HepG2 (cell line): ENCODE measurements at regions of chr14 and their contacts with region 1.

Region 1: DNA sequence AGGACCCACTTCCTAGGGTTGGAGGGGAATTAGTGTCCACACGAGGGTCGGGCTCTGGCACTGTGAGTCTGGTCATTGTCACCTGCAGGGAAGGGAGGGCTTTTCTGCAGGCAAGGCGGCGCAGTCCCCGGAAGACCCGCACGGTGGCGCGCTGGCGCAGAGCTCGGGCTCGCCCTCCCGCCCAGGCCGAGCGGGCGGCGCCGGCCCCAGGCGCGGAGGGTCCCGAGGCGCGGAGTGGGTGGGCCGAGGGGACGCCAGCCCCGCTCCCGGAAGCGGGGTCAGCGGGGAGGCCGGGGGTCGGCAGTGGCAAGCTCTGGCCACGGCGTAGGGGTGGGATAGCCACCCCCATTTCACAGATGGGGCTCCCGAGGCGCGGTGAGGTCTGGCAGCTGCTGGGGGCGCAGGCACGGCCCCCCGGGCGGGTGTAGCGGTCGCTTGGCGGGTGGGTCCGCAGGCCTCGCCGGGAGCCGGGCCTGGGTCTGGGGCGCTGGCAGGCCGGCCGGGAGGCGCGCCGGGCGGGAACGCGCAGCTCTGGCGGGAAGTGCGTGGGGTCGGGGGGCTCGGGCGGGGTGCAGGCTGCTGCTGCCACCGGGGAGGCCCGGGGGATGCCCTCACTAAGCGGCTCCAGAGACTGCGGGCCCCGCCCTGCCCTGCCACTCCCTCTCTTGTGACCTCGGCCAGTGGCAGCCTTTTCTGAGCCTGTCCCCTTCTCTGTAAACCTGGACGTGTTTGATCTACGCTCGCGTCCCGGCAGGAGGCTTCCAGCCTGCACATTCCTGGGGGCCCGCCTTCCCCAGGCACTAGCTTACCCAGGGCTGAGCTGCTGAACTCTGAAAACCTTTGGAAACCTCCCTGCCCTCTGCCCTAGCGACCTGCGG is 46.1 kb downstream of the CYP46A1 start:
- DNase-seq: peak; percentile 93
- ATAC-seq: peak; percentile 90
- H3K4me3 ChIP-seq: peak overlapping the region; percentile 51 to 71 (median 63); a peak in 5 of 6 replicates
- H3K27ac ChIP-seq: peak overlapping the region; percentile 65
- H3K4me1 ChIP-seq: peaks cover 49% of the 10 kb centered on the region
- H3K27me3 ChIP-seq: peaks cover 8 to 43% of the 10 kb centered on the region in 2 experiments
- CTCF ChIP-seq: peak; percentile 83
- EP300 ChIP-seq: peak; percentile 26 to 32; a peak in 1 of 4 replicates
- POLR2A ChIP-seq: 0 out of 4 replicates have a peak, but pooled peaks of 1 of the 2 experiments have one; percentile 14
- RAD21 ChIP-seq: peak; percentile 96

Region 2: DNA sequence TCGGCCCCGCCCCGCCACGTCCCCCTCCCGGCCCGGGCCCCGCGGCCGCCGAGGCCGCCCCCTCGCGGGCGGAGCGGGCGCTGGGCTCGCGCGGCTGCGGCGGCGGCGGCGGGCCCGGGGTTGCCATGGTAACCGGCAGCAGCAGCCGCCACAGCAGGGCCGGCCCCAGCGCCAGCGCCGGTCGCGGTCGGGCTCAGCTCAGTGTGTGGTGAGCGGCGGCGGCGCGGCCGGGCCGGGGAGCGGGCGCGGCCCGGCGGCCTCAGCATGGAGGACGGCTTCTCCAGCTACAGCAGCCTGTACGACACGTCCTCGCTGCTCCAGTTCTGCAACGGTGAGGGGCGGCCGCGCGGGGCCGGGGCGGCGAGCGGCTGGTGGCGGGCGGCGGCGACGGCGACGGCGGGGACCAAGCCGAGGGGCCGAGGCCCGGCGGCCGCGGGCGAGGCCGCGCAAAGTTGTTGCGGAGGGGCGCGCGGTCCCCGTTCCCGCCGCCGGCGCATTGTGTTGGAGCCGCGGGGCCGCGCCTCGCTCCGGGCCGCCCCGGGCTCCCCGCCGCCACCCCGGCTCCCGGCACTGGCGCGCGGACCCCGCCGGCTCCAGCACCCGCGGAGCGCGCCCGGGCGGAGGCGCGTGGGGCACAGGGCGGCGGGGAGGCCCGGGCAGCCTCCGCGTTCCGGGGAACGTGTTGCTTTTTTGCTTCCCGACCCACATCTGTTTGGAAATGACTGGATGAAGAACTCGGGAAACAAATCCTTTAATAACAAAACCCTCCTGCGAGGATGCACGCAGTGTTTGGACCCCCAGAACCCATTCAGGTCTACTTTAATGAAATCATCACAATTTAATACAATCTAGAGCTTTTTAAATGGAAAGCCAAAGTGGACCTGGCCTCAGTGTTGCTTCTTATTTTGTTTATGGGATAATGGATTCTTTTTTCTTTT is 63.3 kb after region 1 on chr14 and contains the start of gene EML1:
- CTCF ChIA-PET with region 1: interaction called, 12 read pairs
- POLR2A ChIA-PET with region 1: no interaction called
- in situ Hi-C with region 1: no loop called
- intact Hi-C with region 1: loop called (anchors 1 kb)
- DNase-seq: peak; percentile 41
- ATAC-seq: peak; percentile 94
- H3K4me3 ChIP-seq: peak within 1 kb of the TSS; percentile 44 to 64 (median 62)
- H3K27ac ChIP-seq: no peak within 1 kb of the TSS
- H3K4me1 ChIP-seq: peaks cover 34% of the 10 kb centered on the region
- H3K27me3 ChIP-seq: peaks cover 2 to 37% of the 10 kb centered on the region in 2 experiments; a peak in 4 of 5 replicates
- CTCF ChIP-seq: no peak; the same call in 1 of the 2 replicates
- EP300 ChIP-seq: no peak
- POLR2A ChIP-seq: no peak
- RAD21 ChIP-seq: peak; percentile 25; the same call in 1 of the 2 replicates
- total RNA-seq, gene EML1: 1.3 and 1.7 TPM in 2 replicates

Region 3: DNA sequence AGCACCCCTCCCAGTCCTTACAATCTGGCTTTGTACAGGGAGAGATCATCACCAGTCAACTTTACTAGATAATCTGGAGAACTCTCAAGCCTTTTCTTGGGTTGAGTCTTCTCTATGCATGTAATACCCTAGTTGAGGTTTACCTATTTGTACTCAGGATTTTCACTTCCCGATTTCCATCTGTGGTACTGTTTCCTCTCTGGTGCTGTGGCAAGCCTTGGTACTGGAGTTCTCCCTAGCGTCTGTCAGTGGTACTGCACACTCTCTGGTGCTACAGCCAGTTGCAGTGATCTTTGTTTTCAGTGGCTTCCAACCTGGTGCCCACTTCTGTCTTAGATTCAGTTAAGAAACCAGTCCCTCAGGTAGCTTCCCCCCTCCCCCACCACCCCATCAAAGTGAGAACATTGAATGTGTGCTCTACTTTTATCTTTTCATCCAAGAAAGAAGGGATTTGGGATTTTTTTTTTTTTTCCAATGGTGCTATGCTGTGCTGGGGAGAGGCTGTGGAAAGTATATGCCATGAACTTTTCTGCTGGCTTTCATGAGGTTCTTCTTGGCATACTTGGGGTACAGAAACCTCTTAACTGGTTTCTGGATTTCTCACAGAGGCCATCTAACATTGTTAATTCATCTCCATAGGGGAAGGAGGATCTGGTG is 265.6 kb after region 1 on chr14:
- CTCF ChIA-PET with region 1: no interaction called
- POLR2A ChIA-PET with region 1: no interaction called
- in situ Hi-C with region 1: no loop called
- intact Hi-C with region 1: no loop called
- DNase-seq: peak; percentile 55
- ATAC-seq: peak; percentile 96
- H3K4me3 ChIP-seq: no peak overlapping the region
- H3K27ac ChIP-seq: no peak overlapping the region
- H3K4me1 ChIP-seq: no peaks in the 10 kb centered on the region
- H3K27me3 ChIP-seq: no peaks in the 10 kb centered on the region
- CTCF ChIP-seq: peak; percentile 71
- EP300 ChIP-seq: no peak
- POLR2A ChIP-seq: no peak
- RAD21 ChIP-seq: no peak